ENCODE measurements at regions of chr11 and their contacts with region 1.

Region 1: DNA sequence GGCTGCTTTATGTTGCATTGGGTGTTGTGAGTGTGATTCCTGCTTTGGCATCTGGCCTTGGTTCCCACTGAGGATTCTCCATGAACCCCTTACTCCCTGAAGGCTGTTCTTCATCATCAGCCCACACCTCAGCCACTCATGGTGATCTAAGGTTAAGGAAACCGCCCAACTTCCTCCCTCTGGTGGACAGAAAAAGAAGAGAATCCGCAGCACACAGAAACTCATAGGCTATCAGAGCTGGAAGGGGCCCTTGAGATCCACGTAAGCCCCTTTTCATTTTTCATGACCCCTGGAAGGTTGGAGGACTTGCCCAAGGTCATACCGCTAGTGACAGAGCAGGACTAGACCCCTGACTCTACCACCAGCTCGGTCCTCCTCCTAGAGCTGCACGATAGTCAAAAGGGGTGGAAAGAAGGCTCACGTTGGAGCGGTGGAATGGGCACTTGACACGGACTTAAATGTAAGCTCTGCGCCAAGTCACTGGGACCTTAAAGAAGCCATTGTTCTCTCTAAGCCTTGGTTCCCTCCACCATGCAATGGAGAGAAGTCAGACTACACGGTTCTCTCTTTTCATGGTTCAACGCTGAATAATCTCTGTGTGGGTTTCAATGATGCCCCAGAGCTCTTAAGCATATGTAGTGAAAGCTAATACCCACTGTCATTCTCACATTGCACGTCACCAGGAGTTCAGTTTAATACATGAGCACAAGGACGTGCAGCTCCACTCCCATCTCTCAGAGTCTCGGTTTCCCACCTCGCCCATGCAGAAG is 83.6 kb upstream of the CRTAM start:
- DNase-seq: peak; percentile 63
- ATAC-seq: peak; percentile 40
- H3K4me3 Mint-ChIP-seq: no peak overlapping the region
- H3K27ac Mint-ChIP-seq: no peak overlapping the region
- H3K4me1 Mint-ChIP-seq: peaks cover 70% of the 10 kb centered on the region
- H3K27me3 Mint-ChIP-seq: no peaks in the 10 kb centered on the region
- CTCF ChIP-seq: peak; percentile 60

Region 2: GRCh38 chr11:122578168-122578825 is 176.4 kb before region 1 on chr11:
- CTCF ChIA-PET with region 1: interaction called, 12 read pairs
- POLR2A ChIA-PET with region 1: no interaction called
- intact Hi-C with region 1: no loop called
- DNase-seq: peak; percentile 19
- ATAC-seq: no peak
- H3K4me3 Mint-ChIP-seq: no peak overlapping the region
- H3K27ac Mint-ChIP-seq: no peak overlapping the region
- H3K4me1 Mint-ChIP-seq: peaks cover 10% of the 10 kb centered on the region
- H3K27me3 Mint-ChIP-seq: peaks cover 1% of the 10 kb centered on the region
- CTCF ChIP-seq: no peak

Region 3: GRCh38 chr11:122655527-122656072 is 99.1 kb before region 1 on chr11 and contains the start of gene UBASH3B:
- CTCF ChIA-PET with region 1: interaction called, 88 read pairs
- POLR2A ChIA-PET with region 1: interaction called, 13 read pairs
- intact Hi-C with region 1: loop called (anchors 5 kb)
- DNase-seq: peak; percentile 76
- ATAC-seq: peak; percentile 75
- H3K4me3 Mint-ChIP-seq: peak within 1 kb of the TSS; percentile 97
- H3K27ac Mint-ChIP-seq: peak within 1 kb of the TSS; percentile 91
- H3K4me1 Mint-ChIP-seq: peaks cover 31% of the 10 kb centered on the region
- H3K27me3 Mint-ChIP-seq: no peaks in the 10 kb centered on the region
- CTCF ChIP-seq: peak; percentile 11
- total RNA-seq, gene UBASH3B: 36.1 to 40.6 TPM

Region 4: GRCh38 chr11:122697636-122698167 is 57.0 kb before region 1 on chr11:
- CTCF ChIA-PET with region 1: interaction called, 25 read pairs
- POLR2A ChIA-PET with region 1: interaction called, 4 read pairs
- intact Hi-C with region 1: loop called (anchors 5 kb)
- DNase-seq: peak; percentile 71
- ATAC-seq: peak; percentile 77
- H3K4me3 Mint-ChIP-seq: peak overlapping the region; percentile 46
- H3K27ac Mint-ChIP-seq: peak overlapping the region; percentile 82
- H3K4me1 Mint-ChIP-seq: peaks cover 87% of the 10 kb centered on the region
- H3K27me3 Mint-ChIP-seq: no peaks in the 10 kb centered on the region
- CTCF ChIP-seq: no peak

Region 5: GRCh38 chr11:122733318-122733717 is 21.4 kb before region 1 on chr11:
- CTCF ChIA-PET with region 1: interaction called, 19 read pairs
- POLR2A ChIA-PET with region 1: no interaction called
- intact Hi-C with region 1: no loop called
- DNase-seq: no peak
- ATAC-seq: no peak
- H3K4me3 Mint-ChIP-seq: no peak overlapping the region
- H3K27ac Mint-ChIP-seq: no peak overlapping the region
- H3K4me1 Mint-ChIP-seq: peaks cover 53% of the 10 kb centered on the region
- H3K27me3 Mint-ChIP-seq: no peaks in the 10 kb centered on the region
- CTCF ChIP-seq: no peak

Region 6: DNA sequence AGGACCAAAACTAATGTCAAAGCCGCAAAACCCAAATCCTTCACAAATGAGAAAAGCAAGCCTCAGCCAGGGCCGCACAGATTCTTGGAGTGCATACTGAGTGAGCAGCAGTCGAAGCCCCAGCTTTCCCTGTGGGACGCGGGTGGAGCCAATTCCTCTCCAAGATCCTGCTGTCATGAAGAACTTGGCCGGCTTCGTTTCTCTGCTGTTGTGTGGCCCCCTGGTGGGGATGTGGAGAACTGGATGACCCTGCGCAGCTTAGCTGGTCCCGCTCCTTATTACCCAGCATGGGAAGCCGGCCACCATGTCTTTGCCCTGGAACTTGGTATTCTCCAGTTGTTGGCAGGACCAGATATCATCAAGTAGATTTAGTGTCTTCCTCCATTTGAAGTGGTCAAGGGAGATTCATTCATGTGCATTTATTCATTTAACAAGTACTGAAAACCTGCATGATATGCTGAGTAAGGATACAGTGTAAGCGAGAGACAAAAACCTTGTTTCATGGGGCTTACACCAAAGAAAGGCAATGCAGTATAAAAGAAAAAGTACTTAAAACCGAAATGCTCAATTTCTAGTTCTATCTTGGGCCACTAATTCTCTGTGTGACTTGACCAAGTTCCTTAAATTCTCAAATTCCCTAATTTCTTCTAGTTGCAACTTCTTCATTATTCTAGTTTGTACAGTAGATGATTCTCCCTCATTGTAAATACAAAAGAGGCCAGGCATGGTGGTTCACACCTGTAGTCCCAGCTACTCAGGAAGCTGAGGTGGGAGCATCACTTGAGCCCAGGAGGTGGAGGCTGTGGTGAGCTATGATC is 26.8 kb after region 1 on chr11:
- CTCF ChIA-PET with region 1: interaction called, 57 read pairs
- POLR2A ChIA-PET with region 1: no interaction called
- intact Hi-C with region 1: no loop called
- DNase-seq: peak; percentile 85
- ATAC-seq: peak; percentile 88
- H3K4me3 Mint-ChIP-seq: no peak overlapping the region
- H3K27ac Mint-ChIP-seq: no peak overlapping the region
- H3K4me1 Mint-ChIP-seq: peaks cover 19% of the 10 kb centered on the region
- H3K27me3 Mint-ChIP-seq: no peaks in the 10 kb centered on the region
- CTCF ChIP-seq: peak; percentile 92

Measured in activated CD8-positive, alpha-beta T cell treated with anti-CD3 and anti-CD28 coated beads for 36 hours (primary cell).